ENCODE measurements at regions of chr9 and their contacts with region 1.

Region 1: DNA sequence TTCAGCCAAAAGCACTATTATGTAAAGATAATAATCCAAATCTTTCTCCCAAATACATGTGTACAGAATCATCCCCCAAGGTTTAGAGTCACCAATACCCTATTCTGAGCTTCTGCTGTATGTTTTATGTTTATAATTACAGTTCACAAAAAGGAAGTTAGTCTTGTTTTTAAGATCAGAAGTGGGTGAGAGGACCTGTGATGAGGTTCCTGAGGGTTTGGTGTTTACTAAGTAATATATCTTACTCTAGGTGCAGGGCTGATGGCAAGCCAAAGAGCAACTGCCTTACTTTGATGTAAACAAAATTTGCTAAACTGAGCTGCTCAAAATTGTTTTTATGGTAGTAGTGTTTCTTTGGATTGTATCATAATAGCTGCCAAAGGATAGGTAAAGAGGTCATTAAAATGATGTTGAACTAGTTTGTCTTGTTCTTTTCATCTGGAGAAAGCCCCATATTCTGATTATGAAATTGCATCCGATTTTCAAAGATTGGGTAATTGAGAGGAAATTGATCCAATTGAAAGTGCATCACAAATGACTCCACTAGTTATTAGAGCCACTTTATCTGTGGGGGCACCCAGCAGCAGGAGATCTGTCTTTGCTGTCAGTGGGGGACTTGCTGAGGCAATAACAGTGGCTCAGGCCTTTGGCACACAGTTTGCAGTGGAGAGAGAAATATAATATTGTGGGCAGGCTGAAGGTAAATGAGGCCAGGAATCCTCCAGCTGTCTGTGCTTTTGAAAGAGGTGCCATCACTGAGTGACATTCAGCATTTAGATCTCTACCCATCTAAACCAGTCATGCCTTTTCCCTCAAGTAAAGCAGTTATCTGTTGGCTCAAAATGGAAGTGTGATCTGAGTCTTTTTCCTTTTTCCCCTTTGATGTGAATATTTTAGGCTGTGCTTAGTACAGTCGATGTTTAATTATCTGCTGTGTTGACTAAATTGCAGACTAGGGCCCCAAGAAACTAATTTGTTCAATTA is 14.1 kb downstream of the TRIM32 start:
- DNase-seq: no peak
- H3K4me3 Mint-ChIP-seq: no peak overlapping the region
- H3K27ac Mint-ChIP-seq: peak overlapping the region; percentile 77
- H3K4me1 Mint-ChIP-seq: peaks cover 29% of the 10 kb centered on the region
- H3K27me3 Mint-ChIP-seq: no peaks in the 10 kb centered on the region

Region 2: DNA sequence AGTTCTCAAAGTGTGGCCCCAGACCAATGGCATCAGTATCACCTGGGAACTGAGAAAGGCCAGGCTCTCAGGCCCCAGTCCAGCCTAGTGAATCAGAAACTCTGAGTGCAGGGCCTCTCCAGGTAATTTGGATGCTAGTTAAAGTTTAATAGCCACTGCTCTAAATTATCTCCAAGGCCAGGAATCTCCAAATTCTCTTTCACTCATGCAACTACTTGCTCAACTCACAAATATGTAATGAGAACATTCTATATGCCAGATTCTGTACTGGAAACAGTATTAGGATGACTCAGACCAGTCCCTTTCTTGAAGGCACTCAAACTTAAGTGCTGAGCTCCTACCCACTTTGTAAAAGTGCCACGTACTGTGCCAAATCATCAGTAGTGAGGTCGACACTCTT is 462.9 kb before region 1 on chr9:
- CTCF ChIA-PET with region 1: no interaction called
- intact Hi-C with region 1: no loop called
- DNase-seq: no peak
- H3K4me3 Mint-ChIP-seq: no peak overlapping the region
- H3K27ac Mint-ChIP-seq: no peak overlapping the region
- H3K4me1 Mint-ChIP-seq: no peaks in the 10 kb centered on the region
- H3K27me3 Mint-ChIP-seq: no peaks in the 10 kb centered on the region

Region 3: GRCh38 chr9:116687074-116687753 is 14.0 kb before region 1 on chr9 and contains the start of gene TRIM32:
- CTCF ChIA-PET with region 1: interaction called, 4 read pairs
- intact Hi-C with region 1: loop called (anchors 1 kb)
- DNase-seq: peak; percentile 93
- H3K4me3 Mint-ChIP-seq: peak within 1 kb of the TSS; percentile 85
- H3K27ac Mint-ChIP-seq: peak within 1 kb of the TSS; percentile 54
- H3K4me1 Mint-ChIP-seq: peaks cover 47% of the 10 kb centered on the region
- H3K27me3 Mint-ChIP-seq: no peaks in the 10 kb centered on the region
- total RNA-seq, gene TRIM32: 8.7 to 11.0 TPM

Measured in activated naive CD4-positive, alpha-beta T cell treated with anti-CD3 and anti-CD28 coated beads for 36 hours (primary cell).